Heart right ventricle (tissue), 16 donors: ENCODE measurements at regions of chr19 and their contacts with region 1.

Region 1: GRCh38 chr19:39970675-39971379 is at the start of gene PSMC4:
- DNase-seq: peak; percentile 97 to 98
- ATAC-seq: peak; percentile 99 to 100 (median 100)
- H3K4me3 ChIP-seq: peak within 1 kb of the TSS; percentile 69 to 90 (median 82)
- H3K27ac ChIP-seq: peak within 1 kb of the TSS; percentile 70 to 96 (median 92)
- H3K4me1 ChIP-seq: peaks cover 8 to 33% (median 16%) of the 10 kb centered on the region in 9 donors
- H3K27me3 ChIP-seq: peaks cover 0 to 15% (median 0%) of the 10 kb centered on the region in 7 donors
- CTCF ChIP-seq: peak; percentile 31 to 95 (median 79)
- total RNA-seq, gene PSMC4: 64.1 to 86.5 (median 78.1) TPM

Region 2: DNA sequence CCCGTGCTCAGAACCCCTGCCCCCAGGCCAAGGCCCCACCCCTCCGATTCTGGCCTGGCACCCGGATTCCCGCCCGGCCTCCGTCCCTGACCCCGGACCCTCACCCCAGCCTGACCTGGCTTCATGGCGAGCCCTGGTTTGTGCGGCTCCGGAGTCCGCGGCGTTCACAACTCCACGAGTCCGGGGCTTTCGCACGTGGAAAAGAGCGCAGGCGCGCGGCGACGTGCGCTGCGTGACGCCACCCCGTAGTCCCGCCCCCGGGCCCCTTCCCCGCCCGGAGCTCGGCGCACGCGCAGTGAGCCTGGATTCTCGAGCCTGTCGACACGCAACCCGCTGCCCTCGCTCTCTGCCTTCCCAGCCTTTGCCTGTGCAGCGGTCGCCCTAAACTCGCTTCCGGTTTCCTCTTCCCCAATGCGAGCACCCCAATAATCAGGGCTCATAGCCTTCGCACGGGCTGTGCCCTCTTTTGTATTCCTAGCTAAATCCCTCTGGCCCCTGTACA is 124.6 kb before region 1 on chr19 and contains the start of gene FBL:
- intact Hi-C with region 1: loop called in 3 of 10 experiments (anchors 1 to 5 kb)
- DNase-seq: peak; percentile 94 to 99
- ATAC-seq: peak; percentile 97 to 99 (median 98)
- H3K4me3 ChIP-seq: peak within 1 kb of the TSS; percentile 53 to 97 (median 78)
- H3K27ac ChIP-seq: peak within 1 kb of the TSS; percentile 49 to 91 (median 84)
- H3K4me1 ChIP-seq: peaks cover 4 to 54% (median 46%) of the 10 kb centered on the region in 9 donors
- H3K27me3 ChIP-seq: no peaks in the 10 kb centered on the region
- CTCF ChIP-seq: no peak
- total RNA-seq, gene FBL: 52.7 to 95.4 (median 67.4) TPM

Region 3: GRCh38 chr19:39996811-39997594 is 26.2 kb after region 1 on chr19 and contains the start of gene ZNF546:
- intact Hi-C with region 1: loop called in 5 of 10 experiments (anchors 2 kb)
- DNase-seq: peak; percentile 91 to 94
- ATAC-seq: peak; percentile 98 to 100 (median 99)
- H3K4me3 ChIP-seq: peak within 1 kb of the TSS; percentile 64 to 83 (median 72)
- H3K27ac ChIP-seq: peak within 1 kb of the TSS; percentile 82 to 95 (median 91)
- H3K4me1 ChIP-seq: peaks cover 0 to 24% (median 18%) of the 10 kb centered on the region in 9 donors
- H3K27me3 ChIP-seq: no peaks in the 10 kb centered on the region
- CTCF ChIP-seq: no peak
- total RNA-seq, gene ZNF546: 5.7 to 13.5 (median 8.9) TPM

Region 4: DNA sequence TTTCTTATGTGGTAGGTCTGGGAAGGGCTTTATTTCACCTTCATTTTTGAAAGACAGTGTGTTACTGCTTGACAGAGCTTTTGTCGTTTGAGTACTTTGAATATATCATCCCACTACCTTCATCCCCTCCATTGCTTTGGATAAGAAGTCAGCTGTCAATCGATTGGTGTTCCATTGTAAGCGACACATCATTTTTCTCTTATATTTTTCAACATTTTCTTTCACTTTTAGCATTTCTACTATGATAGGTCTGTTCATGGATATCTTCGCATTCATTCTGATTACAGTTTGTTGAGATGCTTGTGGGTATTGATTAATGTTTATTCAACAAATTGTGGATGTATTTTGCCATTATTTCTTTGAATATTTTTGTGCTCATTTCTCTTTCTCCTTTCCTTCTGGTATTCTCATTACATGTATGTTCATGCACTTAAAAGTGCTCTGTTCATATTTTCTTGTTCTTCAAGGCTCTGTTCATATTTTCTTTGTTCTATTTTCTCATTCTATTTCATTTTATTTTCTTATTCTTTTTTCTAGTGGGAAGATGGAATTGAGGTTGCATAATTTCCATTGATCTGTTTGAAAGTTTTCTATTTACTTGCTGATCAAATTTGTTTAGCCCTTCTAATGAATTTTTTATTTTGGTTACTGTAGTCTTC is 55.2 kb after region 1 on chr19:
- intact Hi-C with region 1: no loop called
- DNase-seq: no peak
- ATAC-seq: no peak
- H3K4me3 ChIP-seq: no peak overlapping the region
- H3K27ac ChIP-seq: no peak overlapping the region
- H3K4me1 ChIP-seq: no peaks in the 10 kb centered on the region
- H3K27me3 ChIP-seq: no peaks in the 10 kb centered on the region
- CTCF ChIP-seq: no peak